Dorsolateral prefrontal cortex (tissue), 120 donors: ENCODE measurements at regions of chrX and their contacts with region 1.

Region 1: DNA sequence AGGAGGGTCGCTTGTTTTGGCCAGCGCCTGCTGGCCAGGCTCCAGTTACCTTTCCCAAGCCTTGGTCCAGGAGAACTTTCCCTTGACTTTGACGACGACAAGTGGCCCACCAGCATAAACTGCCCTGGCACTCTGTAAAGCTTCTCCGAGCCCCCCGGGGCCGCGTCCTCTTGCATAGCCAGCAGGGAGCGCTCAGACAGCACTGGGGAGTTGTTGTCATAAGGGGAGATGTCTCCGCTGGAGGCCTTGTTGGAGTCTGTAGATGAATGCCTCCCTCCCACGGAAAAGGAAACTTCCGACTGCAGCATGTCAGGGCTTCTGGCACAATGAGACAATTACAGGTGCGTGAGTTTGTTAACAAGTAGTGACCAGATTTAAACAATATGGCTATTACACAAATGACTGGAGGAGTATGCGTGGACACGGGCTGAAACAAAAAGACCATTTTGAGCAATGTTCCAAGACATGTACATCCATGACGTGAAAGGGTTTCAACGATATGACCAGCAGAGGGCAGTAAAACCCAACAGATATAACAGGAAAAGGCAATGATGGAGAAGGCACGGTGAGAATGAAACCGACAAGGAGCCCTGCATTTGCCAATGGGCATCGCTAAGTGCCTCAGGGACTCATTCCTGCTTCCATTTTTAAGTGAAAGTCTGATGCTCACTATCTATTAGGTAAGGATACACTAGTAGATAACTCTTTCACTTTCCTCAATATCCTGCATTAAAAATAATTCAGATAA is 33.0 kb downstream of the HCCS start:
- DNase-seq: peak in 7 of 10 donors; percentile 31 to 66 (median 38)
- H3K4me3 ChIP-seq: peak overlapping the region in 16 of 59 donors; percentile 1 to 37 (median 14)
- H3K27ac ChIP-seq: no peak overlapping the region
- H3K27me3 ChIP-seq: peaks cover 0 to 77% (median 21%) of the 10 kb centered on the region in 45 donors
- CTCF ChIP-seq: peak; percentile 37 to 90 (median 76)

Region 2: GRCh38 chrX:11016728-11017127 is 127.4 kb before region 1 on chrX:
- intact Hi-C with region 1: no loop called
- DNase-seq: no peak
- H3K4me3 ChIP-seq: no peak overlapping the region
- H3K27ac ChIP-seq: no peak overlapping the region
- H3K27me3 ChIP-seq: peaks cover 0 to 46% (median 2%) of the 10 kb centered on the region in 45 donors
- CTCF ChIP-seq: no peak

Region 3: GRCh38 chrX:11215191-11215921 is 71.3 kb after region 1 on chrX:
- intact Hi-C with region 1: no loop called
- DNase-seq: no peak
- H3K4me3 ChIP-seq: no peak overlapping the region
- H3K27ac ChIP-seq: no peak overlapping the region
- H3K27me3 ChIP-seq: peaks cover 0 to 35% (median 3%) of the 10 kb centered on the region in 45 donors
- CTCF ChIP-seq: no peak

Region 4: DNA sequence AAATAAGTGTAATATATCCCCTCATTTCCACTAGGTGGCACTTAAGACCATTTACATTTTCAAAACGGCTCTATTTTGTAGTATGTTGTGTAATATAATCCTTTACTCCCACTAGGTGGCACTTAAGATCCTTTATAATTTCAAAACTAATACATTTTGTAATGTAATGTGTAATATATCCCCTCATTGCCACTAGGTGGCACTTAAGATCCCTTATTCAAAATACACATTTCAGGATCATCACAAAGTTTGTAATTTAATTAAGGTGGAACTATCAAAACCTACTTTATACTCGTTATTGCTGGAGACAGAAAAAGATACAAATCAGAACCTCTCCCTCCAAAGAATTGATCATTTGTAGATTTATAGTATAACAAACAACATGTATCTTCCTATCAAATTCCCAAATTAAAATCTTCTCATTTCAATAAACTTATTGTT is 389.1 kb after region 1 on chrX:
- intact Hi-C with region 1: loop called (anchors 5 to 10 kb)
- DNase-seq: no peak
- H3K4me3 ChIP-seq: no peak overlapping the region
- H3K27ac ChIP-seq: no peak overlapping the region
- H3K27me3 ChIP-seq: peaks cover 0 to 47% (median 12%) of the 10 kb centered on the region in 45 donors
- CTCF ChIP-seq: peak; percentile 78 to 100 (median 96)

Region 5: DNA sequence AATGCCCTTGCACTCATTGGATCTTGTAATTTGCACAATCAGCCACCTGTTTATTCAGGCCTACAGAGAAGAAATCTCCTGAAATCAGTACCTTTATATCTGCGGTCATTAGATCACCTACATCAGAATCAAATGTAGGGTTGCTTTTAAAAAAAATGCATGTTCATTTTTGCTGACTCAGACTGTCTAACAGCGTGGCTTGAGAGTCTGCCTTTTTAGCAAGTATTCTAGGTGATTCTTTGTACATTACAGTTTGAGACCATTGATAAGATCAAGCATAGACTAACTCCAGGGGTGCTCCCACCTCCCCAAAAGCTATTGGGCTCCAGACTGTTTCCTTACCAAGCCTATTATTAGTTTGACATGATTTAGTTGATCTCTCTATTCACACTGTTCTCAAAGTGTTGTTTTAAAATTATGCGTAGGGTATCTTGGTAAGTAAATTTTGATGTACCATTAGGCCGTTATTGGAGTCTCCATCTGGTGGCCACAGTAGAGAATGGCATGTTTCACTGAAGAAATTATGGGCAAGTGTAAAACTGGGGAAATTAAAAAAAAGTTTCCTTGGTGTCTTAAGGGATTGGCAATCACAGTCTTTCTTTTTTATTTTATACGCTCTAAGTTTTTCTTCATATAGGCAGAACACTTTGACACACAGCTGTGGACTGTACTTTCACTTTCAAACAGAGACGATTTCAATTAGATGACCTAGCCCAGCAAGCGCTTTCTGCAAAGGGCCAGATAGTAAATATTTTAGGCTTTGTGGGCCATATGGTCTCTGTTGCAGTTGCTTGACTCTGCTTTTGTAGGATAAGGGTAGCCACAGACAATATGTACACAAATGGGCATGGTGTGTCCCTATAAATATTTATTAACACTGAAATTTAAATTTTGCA is 580.3 kb after region 1 on chrX:
- intact Hi-C with region 1: loop called in 1 of 2 experiments (anchors 5 kb)
- DNase-seq: peak in 1 of 10 donors; percentile 12
- H3K4me3 ChIP-seq: no peak overlapping the region
- H3K27ac ChIP-seq: no peak overlapping the region
- H3K27me3 ChIP-seq: peaks cover 0 to 59% (median 19%) of the 10 kb centered on the region in 45 donors
- CTCF ChIP-seq: peak in 55 of 56 donors; percentile 42 to 80 (median 68)

Region 6: GRCh38 chrX:11770320-11770719 is 626.2 kb after region 1 on chrX:
- intact Hi-C with region 1: loop called in 1 of 2 experiments (anchors 10 kb)
- DNase-seq: peak in 4 of 10 donors; percentile 31 to 45 (median 39)
- H3K4me3 ChIP-seq: no peak overlapping the region
- H3K27ac ChIP-seq: no peak overlapping the region
- H3K27me3 ChIP-seq: peaks cover 0 to 63% (median under 1%) of the 10 kb centered on the region in 45 donors
- CTCF ChIP-seq: peak; percentile 39 to 92 (median 81)